ENCODE measurements at regions of chr5 and their contacts with region 1.

Region 1: GRCh38 chr5:91419571-91420537 is 36.7 kb upstream of the ARRDC3 start:
- DNase-seq: peak; percentile 57 to 68 (median 62)
- H3K4me3 ChIP-seq: no peak overlapping the region
- H3K4me3 Mint-ChIP-seq: no peak overlapping the region
- H3K27ac ChIP-seq: no peak overlapping the region
- H3K27ac Mint-ChIP-seq: no peak overlapping the region
- H3K4me1 ChIP-seq: no peaks in the 10 kb centered on the region
- H3K4me1 Mint-ChIP-seq: peaks cover 0 to 6% (median 1%) of the 10 kb centered on the region in 4 donors
- H3K27me3 ChIP-seq: no peaks in the 10 kb centered on the region
- H3K27me3 Mint-ChIP-seq: no peaks in the 10 kb centered on the region

Region 2: DNA sequence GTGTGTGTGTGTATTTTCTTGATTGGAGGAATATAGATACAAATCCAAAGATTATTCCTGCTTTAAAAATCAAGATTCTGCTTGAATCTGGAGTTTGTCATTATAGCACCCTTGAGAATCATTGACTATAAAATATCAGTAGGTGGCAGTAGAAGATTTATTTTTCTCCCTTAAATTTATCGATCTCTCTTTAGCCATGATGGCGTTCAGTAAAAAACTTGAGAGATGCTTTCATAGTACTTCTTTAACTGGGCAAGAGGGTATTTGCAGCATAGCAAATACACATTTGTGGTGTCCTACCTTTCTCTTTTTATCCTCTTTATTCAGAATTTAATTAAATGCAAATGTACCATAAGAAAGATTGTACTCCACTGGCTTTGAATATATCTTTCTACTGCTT is 553.5 kb before region 1 on chr5:
- CTCF ChIA-PET with region 1: interaction called, 184 read pairs
- POLR2A ChIA-PET with region 1: no interaction called
- intact Hi-C with region 1: no loop called
- DNase-seq: peak in 4 of 5 donors; percentile 19 to 30 (median 21)
- H3K4me3 ChIP-seq: no peak overlapping the region
- H3K4me3 Mint-ChIP-seq: no peak overlapping the region
- H3K27ac ChIP-seq: no peak overlapping the region
- H3K27ac Mint-ChIP-seq: no peak overlapping the region
- H3K4me1 ChIP-seq: no peaks in the 10 kb centered on the region
- H3K4me1 Mint-ChIP-seq: no peaks in the 10 kb centered on the region
- H3K27me3 ChIP-seq: no peaks in the 10 kb centered on the region
- H3K27me3 Mint-ChIP-seq: peaks cover 10 to 13% of the 10 kb centered on the region in 2 donors

Region 3: GRCh38 chr5:91101600-91102379 is 318.1 kb before region 1 on chr5:
- CTCF ChIA-PET with region 1: interaction called, 7 read pairs
- POLR2A ChIA-PET with region 1: no interaction called
- intact Hi-C with region 1: loop called (anchors 1 kb)
- DNase-seq: peak; percentile 23 to 49 (median 35)
- H3K4me3 ChIP-seq: no peak overlapping the region
- H3K4me3 Mint-ChIP-seq: no peak overlapping the region
- H3K27ac ChIP-seq: no peak overlapping the region
- H3K27ac Mint-ChIP-seq: no peak overlapping the region
- H3K4me1 ChIP-seq: no peaks in the 10 kb centered on the region
- H3K4me1 Mint-ChIP-seq: no peaks in the 10 kb centered on the region
- H3K27me3 ChIP-seq: no peaks in the 10 kb centered on the region
- H3K27me3 Mint-ChIP-seq: peaks cover 4 to 5% of the 10 kb centered on the region in 2 donors

Region 4: DNA sequence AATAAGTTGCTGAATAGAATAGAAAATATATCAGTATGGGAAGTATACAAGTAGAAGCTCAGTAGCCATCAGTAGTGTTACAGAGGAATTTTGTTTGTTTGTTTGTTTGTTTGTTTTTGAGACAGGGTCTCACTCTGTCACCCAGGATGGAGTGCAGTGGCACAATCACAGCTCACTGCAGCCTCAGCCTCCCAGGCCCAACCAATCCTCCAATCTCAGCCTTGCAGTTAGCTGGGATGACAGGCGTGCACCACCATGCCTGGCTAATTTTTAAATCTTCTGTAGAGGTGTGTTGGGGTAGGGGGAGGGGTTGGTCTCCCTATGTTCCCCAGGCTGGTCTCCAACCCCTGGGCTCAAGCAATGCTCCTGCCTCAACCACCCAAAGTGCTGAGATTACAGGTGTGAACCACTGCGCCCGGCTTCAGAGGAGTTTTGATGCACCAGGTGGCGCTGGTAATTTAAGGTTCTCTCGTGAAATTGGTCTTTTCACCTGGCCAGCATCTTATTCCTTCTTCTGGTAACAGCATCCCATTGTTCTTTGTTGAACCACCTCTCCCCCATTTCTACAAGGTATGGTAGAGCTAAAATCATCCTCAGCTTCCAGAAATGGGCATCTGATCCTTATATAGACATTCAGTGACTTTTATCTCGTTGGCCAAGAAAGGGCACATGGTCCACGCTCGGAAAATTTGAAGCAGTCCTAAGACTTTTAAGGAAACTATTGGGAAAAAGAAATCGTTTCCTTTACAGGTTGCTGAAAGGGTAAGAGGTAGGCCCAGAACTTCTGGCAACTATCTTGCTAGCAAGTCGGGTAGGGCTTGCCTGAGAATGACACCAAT is 193.8 kb before region 1 on chr5:
- CTCF ChIA-PET with region 1: interaction called, 44 read pairs
- POLR2A ChIA-PET with region 1: no interaction called
- intact Hi-C with region 1: loop called (anchors 1 kb)
- DNase-seq: peak; percentile 52 to 58 (median 58)
- H3K4me3 ChIP-seq: no peak overlapping the region
- H3K4me3 Mint-ChIP-seq: peak overlapping the region in 1 of 8 donors; percentile 4
- H3K27ac ChIP-seq: no peak overlapping the region
- H3K27ac Mint-ChIP-seq: no peak overlapping the region
- H3K4me1 ChIP-seq: no peaks in the 10 kb centered on the region
- H3K4me1 Mint-ChIP-seq: no peaks in the 10 kb centered on the region
- H3K27me3 ChIP-seq: no peaks in the 10 kb centered on the region
- H3K27me3 Mint-ChIP-seq: peaks cover 0 to 6% of the 10 kb centered on the region in 2 donors

Region 5: DNA sequence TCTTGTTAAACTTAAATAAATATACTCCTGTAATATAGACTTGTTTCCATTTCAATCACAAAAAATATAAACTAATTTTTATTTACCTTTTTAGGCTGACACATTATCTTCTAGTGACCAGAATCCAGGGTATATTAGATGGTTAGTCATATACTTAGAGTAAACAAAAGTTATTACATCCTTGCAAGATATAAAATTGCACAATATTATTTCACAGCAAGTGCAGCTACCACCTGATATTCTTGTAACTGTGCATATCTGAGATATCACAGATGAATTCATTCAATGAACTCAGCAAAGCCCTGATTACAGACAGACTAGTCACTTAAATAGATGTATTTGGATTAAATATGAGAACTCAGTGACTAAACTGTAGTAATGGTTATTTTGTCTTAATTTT is 11.1 kb before region 1 on chr5:
- CTCF ChIA-PET with region 1: interaction called, 40 read pairs
- POLR2A ChIA-PET with region 1: no interaction called
- intact Hi-C with region 1: no loop called
- DNase-seq: no peak
- H3K4me3 ChIP-seq: no peak overlapping the region
- H3K4me3 Mint-ChIP-seq: no peak overlapping the region
- H3K27ac ChIP-seq: no peak overlapping the region
- H3K27ac Mint-ChIP-seq: no peak overlapping the region
- H3K4me1 ChIP-seq: no peaks in the 10 kb centered on the region
- H3K4me1 Mint-ChIP-seq: no peaks in the 10 kb centered on the region
- H3K27me3 ChIP-seq: no peaks in the 10 kb centered on the region
- H3K27me3 Mint-ChIP-seq: no peaks in the 10 kb centered on the region

Measured in CD4-positive, alpha-beta memory T cell (primary cell).